Astrocyte of the cerebellum (primary cell): ENCODE measurements at regions of chr3 and their contacts with region 1.

Region 1: DNA sequence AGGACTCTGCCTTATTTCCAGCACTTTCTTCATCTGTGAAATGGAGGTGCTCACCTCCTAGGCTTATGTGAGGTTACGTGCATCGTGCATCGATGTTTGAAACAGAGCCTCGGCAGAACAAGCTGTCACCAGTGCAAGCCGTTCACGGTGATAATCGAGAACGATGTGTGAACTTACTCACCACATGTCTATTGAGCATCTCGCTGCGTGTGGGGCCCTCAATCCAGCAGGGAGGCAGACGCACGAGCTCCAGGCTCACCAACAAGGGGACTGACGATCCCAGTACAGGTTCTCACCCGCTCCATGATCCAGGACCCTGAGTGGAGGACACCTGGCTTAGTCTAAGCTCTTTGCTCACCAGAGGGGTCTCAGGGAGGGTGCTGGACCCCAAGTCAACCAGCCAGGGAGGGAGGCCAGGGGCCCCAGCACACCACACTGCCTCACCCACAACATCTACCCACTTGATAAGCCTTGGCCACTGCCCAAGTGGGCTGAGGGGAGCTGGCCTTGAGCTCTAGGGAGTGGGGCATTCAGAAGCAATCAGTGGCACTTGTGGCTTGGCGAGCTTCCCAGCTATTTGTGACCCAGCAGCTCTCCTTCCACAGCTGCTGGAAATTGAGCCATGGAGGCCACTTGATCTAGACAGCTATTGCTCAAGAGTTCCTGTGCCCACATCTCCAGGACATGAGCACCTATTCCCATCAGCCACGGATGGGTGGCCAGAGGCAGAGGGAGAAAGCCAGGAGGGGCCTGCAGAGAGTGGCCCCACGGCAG is 34.4 kb upstream of the SLC6A1 start:
- DNase-seq: no peak
- H3K4me3 ChIP-seq: no peak overlapping the region
- CTCF ChIP-seq: no peak

Region 2: DNA sequence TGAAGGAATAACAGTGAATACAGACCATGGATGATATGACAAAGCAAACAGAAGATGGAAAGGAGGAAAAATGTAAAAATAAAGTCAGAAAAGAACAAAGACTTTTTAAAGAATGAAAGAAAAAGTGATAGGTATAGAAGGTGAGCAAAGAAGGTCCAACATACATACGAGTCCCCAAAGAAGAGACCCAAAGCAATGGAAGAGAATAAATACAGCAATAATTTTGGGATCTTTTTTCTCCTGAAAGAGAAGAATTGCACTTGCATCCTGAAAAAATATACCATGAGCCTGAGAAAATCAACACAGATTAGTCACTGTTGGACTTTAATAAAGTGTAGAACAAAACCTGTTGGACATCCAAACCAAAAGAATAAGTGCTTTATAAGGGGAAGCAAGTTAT is 50.9 kb before region 1 on chr3:
- in situ Hi-C with region 1: loop called (anchors 5 kb)
- DNase-seq: no peak
- H3K4me3 ChIP-seq: no peak overlapping the region
- CTCF ChIP-seq: no peak